PC-9 (cell line): ENCODE measurements at regions of chr15 and their contacts with region 1.

Region 1: GRCh38 chr15:58182460-58183163 is 44.4 kb downstream of the AQP9 start:
- DNase-seq: peak in 1 of 2 experiments; percentile 29
- H3K4me3 ChIP-seq: no peak overlapping the region
- H3K27ac ChIP-seq: no peak overlapping the region
- H3K4me1 ChIP-seq: no peaks in the 10 kb centered on the region
- H3K27me3 ChIP-seq: no peaks in the 10 kb centered on the region
- CTCF ChIP-seq: peak; percentile 64

Region 2: DNA sequence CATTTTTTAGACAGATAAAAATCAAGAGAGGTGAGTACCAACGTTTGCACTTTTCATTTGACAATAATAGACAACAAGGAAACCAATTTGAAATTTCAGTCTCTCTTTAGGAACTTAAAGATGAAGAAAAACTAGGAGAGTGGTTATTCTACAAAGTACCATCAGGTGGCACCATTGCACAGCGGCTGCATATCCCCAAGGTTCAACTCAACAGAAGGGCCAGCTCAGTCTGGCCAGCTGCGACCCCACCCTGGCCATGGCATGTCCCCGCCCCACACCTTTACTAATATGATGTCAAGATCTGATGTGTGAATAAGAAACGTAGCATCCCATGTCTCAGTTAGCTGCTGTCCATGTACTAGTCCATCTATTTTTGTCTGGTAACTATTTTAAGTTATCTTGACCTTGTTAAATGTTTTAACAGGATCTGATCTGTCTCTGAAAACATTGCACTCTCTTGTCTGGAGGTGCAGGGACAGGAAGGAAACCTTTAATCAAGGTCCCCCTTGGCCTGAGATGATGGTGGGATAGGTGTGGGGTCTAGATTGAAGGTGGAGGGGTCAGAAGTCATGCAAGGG is 841.8 kb before region 1 on chr15:
- CTCF ChIA-PET with region 1: no interaction called
- POLR2A ChIA-PET with region 1: no interaction called
- intact Hi-C with region 1: loop called (anchors 5 kb)
- DNase-seq: peak; percentile 46 to 50
- H3K4me3 ChIP-seq: no peak overlapping the region
- H3K27ac ChIP-seq: no peak overlapping the region
- H3K4me1 ChIP-seq: no peaks in the 10 kb centered on the region
- H3K27me3 ChIP-seq: no peaks in the 10 kb centered on the region
- CTCF ChIP-seq: peak; percentile 87

Region 3: GRCh38 chr15:57561041-57561711 is 621.4 kb before region 1 on chr15:
- CTCF ChIA-PET with region 1: no interaction called
- POLR2A ChIA-PET with region 1: no interaction called
- intact Hi-C with region 1: loop called (anchors 2 kb)
- DNase-seq: peak; percentile 68 to 83
- H3K4me3 ChIP-seq: no peak overlapping the region
- H3K27ac ChIP-seq: peak overlapping the region; percentile 96
- H3K4me1 ChIP-seq: peaks cover 11% of the 10 kb centered on the region
- H3K27me3 ChIP-seq: no peaks in the 10 kb centered on the region
- CTCF ChIP-seq: peak; percentile 91

Region 4: DNA sequence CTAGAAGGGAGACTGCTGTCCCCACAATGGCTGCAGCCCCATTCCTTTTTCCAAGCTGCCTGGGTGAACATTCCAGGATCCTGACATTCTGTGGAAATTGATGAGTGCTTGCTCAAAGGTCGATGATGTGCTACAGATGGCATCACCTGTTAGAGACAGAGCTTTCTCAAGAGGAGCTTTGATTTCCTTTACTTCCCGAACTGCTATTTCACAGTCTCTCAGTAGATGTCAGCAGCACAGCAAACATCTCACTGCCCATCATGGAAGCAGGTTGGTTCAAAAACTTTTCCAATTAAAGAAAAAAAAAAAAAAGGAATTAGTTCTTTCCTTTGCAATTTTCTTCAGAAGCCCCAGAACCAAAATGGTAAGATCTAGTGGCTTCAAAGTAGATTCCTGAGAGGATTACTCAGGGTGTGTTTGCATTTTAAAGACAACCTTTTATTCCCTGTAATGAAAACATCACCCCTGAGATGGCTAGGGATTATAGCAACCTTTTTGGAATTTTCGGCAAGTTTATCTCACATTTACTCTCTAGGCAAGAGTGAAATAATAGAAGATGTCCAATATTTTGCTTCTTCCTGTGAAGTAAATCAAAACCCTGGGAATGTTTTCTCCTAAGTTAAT is 431.3 kb before region 1 on chr15:
- CTCF ChIA-PET with region 1: no interaction called
- POLR2A ChIA-PET with region 1: no interaction called
- intact Hi-C with region 1: loop called (anchors 5 kb)
- DNase-seq: no peak
- H3K4me3 ChIP-seq: no peak overlapping the region
- H3K27ac ChIP-seq: no peak overlapping the region
- H3K4me1 ChIP-seq: no peaks in the 10 kb centered on the region
- H3K27me3 ChIP-seq: no peaks in the 10 kb centered on the region
- CTCF ChIP-seq: peak; percentile 56

Region 5: DNA sequence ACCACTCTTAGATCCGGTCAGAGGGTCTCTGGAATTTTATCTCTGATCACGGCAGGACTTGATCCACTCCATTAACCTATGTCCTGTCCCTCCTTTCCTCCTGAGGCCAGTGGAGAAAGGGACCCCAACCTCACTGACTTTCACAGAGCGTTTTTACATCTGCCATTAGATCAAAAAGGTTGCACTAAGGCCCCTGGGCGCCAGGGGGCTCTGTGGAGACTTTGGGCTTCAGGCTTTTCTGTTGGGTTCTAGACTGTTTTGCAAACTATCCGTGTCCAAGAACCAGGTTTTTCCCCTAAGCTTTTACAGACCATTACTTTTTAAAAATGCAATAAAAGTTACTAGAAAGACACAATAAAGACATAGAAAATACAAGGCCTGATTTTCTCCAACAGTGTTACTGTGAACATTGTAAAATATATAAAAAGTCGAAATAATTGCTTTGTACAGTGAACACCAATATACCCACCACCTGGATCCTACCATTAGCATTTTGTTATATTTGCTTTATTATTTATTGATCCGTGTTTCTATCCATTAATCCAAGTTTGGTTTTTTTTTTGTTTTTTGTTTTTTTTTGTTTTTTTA is 316.4 kb before region 1 on chr15:
- CTCF ChIA-PET with region 1: interaction called, 21 read pairs
- POLR2A ChIA-PET with region 1: no interaction called
- intact Hi-C with region 1: loop called (anchors 1 kb)
- DNase-seq: peak in 1 of 2 experiments; percentile 35
- H3K4me3 ChIP-seq: no peak overlapping the region
- H3K27ac ChIP-seq: no peak overlapping the region
- H3K4me1 ChIP-seq: no peaks in the 10 kb centered on the region
- H3K27me3 ChIP-seq: no peaks in the 10 kb centered on the region
- CTCF ChIP-seq: peak; percentile 74; the same call in 1 of the 2 replicates

Region 6: GRCh38 chr15:58043192-58043903 is 139.3 kb before region 1 on chr15:
- CTCF ChIA-PET with region 1: no interaction called
- POLR2A ChIA-PET with region 1: no interaction called
- intact Hi-C with region 1: loop called (anchors 1 kb)
- DNase-seq: peak in 1 of 2 experiments; percentile 3
- H3K4me3 ChIP-seq: no peak overlapping the region
- H3K27ac ChIP-seq: no peak overlapping the region
- H3K4me1 ChIP-seq: no peaks in the 10 kb centered on the region
- H3K27me3 ChIP-seq: no peaks in the 10 kb centered on the region
- CTCF ChIP-seq: peak; percentile 71

Region 7: DNA sequence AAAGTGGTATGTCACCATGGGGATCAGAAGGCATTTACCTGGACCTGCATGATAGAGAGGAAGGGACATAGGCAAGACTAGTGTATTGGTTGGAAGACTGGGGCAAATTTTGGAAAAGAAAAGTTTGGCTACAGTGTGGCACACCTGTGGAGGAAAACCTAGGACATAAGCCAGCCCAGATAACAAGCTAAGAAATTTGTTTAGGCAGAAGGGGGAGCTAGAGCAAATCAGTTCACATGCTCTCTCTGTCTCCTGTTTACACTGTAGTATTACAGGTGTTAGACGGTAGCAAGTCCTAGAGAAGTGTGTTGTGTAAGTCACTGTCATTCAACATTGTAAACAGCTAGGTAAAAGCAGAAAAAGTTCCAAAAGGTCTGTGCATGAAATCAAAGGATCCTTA is 105.2 kb before region 1 on chr15:
- CTCF ChIA-PET with region 1: no interaction called
- POLR2A ChIA-PET with region 1: no interaction called
- intact Hi-C with region 1: loop called (anchors 2 kb)
- DNase-seq: no peak
- H3K4me3 ChIP-seq: no peak overlapping the region
- H3K27ac ChIP-seq: no peak overlapping the region
- H3K4me1 ChIP-seq: no peaks in the 10 kb centered on the region
- H3K27me3 ChIP-seq: no peaks in the 10 kb centered on the region
- CTCF ChIP-seq: no peak; the same call in 1 of the 2 replicates

Region 8: DNA sequence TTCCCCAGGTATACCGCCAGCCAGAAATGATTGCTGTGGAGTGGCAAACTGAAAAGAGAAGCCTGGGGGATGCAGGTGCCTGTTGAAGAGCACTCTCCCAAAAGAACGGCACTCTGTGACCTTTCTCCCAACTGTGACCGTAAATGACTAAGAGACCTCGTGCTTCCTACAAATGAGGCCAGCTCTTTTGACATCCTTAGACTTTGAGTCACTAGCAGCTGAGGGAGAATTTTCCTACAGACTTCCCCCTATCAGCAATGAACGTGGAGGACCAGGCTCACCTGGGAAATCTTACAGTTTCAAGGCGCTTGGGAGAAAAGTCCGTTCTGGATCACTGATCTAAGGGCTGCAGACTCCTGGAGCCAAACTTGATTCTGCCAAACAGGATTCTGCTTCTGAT is 35.9 kb before region 1 on chr15:
- CTCF ChIA-PET with region 1: no interaction called
- POLR2A ChIA-PET with region 1: no interaction called
- intact Hi-C with region 1: no loop called
- DNase-seq: peak in 1 of 2 experiments; percentile 56
- H3K4me3 ChIP-seq: no peak overlapping the region
- H3K27ac ChIP-seq: peak overlapping the region; percentile 55
- H3K4me1 ChIP-seq: peaks cover 11% of the 10 kb centered on the region
- H3K27me3 ChIP-seq: no peaks in the 10 kb centered on the region
- CTCF ChIP-seq: no peak

Region 9: GRCh38 chr15:58282060-58282708 is 99.6 kb after region 1 on chr15:
- CTCF ChIA-PET with region 1: no interaction called
- POLR2A ChIA-PET with region 1: no interaction called
- intact Hi-C with region 1: no loop called
- DNase-seq: no peak
- H3K4me3 ChIP-seq: no peak overlapping the region
- H3K27ac ChIP-seq: no peak overlapping the region
- H3K4me1 ChIP-seq: 0 out of 2 replicates have a peak, but pooled peaks cover 4% of the 10 kb centered on the region
- H3K27me3 ChIP-seq: no peaks in the 10 kb centered on the region
- CTCF ChIP-seq: no peak